ENCODE measurements at regions of chr1 and their contacts with region 1.

Region 1: GRCh38 chr1:10085061-10085460 is 52.3 kb downstream of the UBE4B start:
- DNase-seq: no peak
- H3K4me3 ChIP-seq: no peak overlapping the region
- H3K27ac ChIP-seq: no peak overlapping the region
- H3K4me1 ChIP-seq: no peaks in the 10 kb centered on the region
- H3K27me3 ChIP-seq: no peaks in the 10 kb centered on the region
- CTCF ChIP-seq: no peak
- POLR2A ChIP-seq: no peak

Region 2: DNA sequence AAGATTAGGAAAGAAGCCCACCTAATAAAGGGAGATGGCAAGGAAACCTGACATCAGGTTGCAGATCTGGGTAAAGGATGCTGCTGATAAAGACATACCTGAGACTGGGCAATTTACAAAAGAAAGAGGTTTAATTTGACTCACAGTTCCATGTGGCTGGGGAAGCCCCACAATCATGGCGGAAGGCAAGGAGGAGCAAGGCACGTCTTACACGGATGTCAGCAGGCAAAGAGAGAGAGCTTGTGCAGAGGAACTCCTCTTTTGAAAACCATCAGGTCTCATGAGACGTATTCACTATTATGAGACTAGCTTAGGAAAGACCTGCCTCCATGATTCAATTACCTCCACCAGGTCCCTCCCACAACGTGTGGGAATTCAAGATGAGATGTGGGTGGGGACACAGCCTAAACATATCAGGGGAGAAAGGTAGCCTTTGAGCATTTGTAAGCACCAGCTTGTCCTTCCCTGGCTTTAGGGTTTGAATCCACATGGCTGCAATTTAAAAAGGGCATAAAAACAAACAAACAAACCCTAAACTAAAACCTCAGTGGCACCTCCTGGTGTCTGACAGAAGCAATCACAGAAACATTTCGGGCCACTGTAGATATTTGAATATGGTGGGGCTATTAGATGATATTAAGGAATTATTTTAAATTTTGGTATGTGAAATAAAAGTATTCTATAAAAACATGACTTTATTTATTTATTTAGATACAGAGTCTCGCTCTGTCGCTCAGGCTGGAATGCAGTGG is 1091.9 kb before region 1 on chr1:
- CTCF ChIA-PET with region 1: no interaction called
- POLR2A ChIA-PET with region 1: no interaction called
- dilution Hi-C with region 1: no loop called
- intact Hi-C with region 1: no loop called
- DNase-seq: no peak
- H3K4me3 ChIP-seq: no peak overlapping the region
- H3K27ac ChIP-seq: no peak overlapping the region
- H3K4me1 ChIP-seq: no peaks in the 10 kb centered on the region
- H3K27me3 ChIP-seq: no peaks in the 10 kb centered on the region
- CTCF ChIP-seq: peak; percentile 14 to 27
- POLR2A ChIP-seq: no peak

Region 3: GRCh38 chr1:10045480-10046355 is 39.3 kb before region 1 on chr1:
- CTCF ChIA-PET with region 1: no interaction called
- POLR2A ChIA-PET with region 1: no interaction called
- dilution Hi-C with region 1: no loop called
- intact Hi-C with region 1: loop called (anchors 1 kb)
- DNase-seq: no peak
- H3K4me3 ChIP-seq: no peak overlapping the region
- H3K27ac ChIP-seq: no peak overlapping the region
- H3K4me1 ChIP-seq: no peaks in the 10 kb centered on the region
- H3K27me3 ChIP-seq: no peaks in the 10 kb centered on the region
- CTCF ChIP-seq: no peak
- POLR2A ChIP-seq: no peak

Region 4: DNA sequence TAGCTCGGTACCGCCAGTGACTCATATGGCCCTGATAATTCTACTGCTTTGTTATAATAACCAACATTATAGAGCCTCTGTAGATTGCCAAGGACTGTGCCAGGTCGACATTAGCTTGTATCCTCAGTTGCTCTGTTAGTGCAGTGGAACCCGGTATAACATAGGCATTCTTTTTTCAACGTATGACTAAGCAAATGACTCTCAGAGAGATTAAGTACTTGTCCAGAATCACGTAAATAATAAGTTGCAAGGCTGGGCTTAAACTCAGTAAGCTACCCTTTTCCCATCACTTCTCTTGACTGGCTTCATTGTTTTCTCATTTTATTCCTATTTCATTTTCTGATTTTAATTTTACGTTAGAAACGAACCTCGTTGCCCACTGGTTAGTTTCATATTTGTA is 32.8 kb after region 1 on chr1:
- CTCF ChIA-PET with region 1: no interaction called
- POLR2A ChIA-PET with region 1: no interaction called
- dilution Hi-C with region 1: no loop called
- intact Hi-C with region 1: no loop called
- DNase-seq: no peak
- H3K4me3 ChIP-seq: no peak overlapping the region
- H3K27ac ChIP-seq: no peak overlapping the region
- H3K4me1 ChIP-seq: no peaks in the 10 kb centered on the region
- H3K27me3 ChIP-seq: no peaks in the 10 kb centered on the region
- CTCF ChIP-seq: no peak
- POLR2A ChIP-seq: no peak